Activated naive CD4-positive, alpha-beta T cell treated with anti-CD3 and anti-CD28 coated beads for 36 hours (primary cell): ENCODE measurements at regions of chr4 and their contacts with region 1.

Region 1: GRCh38 chr4:44678094-44679041 is at the start of gene GUF1:
- DNase-seq: peak; percentile 90
- H3K4me3 Mint-ChIP-seq: peak within 1 kb of the TSS; percentile 95
- H3K27ac Mint-ChIP-seq: peak within 1 kb of the TSS; percentile 94
- H3K4me1 Mint-ChIP-seq: peaks cover 35% of the 10 kb centered on the region
- H3K27me3 Mint-ChIP-seq: no peaks in the 10 kb centered on the region
- total RNA-seq, gene GUF1: 32.6 to 32.9 TPM

Region 2: DNA sequence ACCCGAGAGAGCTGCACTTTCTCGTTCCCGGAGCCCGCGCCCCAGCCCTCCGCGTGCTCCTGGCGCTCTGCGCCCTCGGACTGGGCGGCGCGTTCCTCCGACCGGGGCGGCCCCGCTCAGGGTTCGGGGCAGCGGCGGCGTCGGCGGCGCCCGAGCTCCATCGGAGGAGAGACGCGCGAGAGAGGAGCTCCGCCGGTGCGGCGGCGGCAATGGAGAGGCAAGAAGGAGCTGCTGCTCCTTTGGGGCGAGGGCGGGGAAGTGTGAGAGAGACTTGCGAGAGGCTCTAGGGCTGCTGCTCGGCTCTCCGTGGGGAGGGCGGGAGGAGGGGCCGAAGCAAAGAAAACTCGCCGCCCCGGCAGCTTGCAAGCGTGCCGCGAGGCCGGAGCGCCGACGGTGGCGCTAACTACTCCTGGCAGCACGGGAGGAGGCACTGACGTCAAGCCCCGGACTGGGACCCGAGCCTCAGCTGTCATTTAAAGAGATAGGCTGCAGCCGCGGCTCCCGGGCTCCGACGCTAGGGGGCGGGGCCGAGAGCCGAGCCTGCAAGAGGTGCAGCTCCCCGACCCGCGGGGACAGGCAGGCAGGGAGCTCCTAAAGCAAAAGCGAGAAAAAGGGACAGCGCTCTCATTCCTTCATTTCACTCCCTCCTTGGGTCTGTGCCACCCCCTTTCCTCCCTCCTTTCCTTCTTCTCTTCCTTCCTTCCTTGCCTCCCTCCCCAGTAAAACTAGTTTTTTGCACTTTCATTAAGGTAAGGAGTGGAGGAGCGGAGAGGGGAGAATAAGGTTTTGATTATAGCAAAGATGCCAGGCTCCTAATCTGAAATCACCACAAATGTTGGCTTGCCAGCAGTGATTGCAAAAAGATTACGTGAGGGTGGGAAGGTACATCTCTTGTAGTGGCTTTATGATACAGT is 229.6 kb before region 1 on chr4 and contains the start of gene KCTD8:
- CTCF ChIA-PET with region 1: no interaction called
- intact Hi-C with region 1: loop called (anchors 10 kb)
- DNase-seq: peak; percentile 74
- H3K4me3 Mint-ChIP-seq: peak within 1 kb of the TSS; percentile 62
- H3K27ac Mint-ChIP-seq: no peak within 1 kb of the TSS
- H3K4me1 Mint-ChIP-seq: peaks cover 17% of the 10 kb centered on the region
- H3K27me3 Mint-ChIP-seq: peaks cover 54% of the 10 kb centered on the region
- total RNA-seq, gene KCTD8: not detected

Region 3: DNA sequence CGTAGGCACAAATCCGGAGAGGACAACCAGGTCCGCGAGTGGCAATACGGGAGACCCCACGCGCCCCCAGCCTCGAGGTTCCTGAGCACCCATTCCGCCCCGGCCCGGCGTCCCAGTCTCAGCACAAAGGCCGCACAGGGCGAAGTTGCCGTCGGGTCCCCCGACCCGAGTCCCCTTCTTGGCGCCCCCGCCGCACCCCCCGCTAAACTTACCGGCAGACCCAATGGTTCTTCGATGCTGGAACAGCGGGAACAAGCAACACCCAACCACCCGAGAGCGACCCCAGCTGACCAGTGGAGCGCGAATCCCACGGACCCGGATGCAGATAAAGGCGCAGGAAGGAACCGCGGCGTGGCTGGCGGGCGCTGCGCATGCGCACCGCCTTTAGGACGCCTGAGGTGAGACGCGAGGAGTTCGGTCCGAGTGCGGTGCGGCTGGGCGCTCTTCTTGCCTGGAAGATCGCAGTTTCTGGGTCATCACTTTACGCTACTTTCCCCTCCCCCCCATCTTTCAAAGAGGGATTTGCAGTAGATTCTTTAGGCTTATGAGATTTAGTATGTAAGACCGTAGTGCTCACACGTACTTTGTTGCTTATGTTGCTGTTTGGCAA is 48.0 kb after region 1 on chr4 and contains the start of gene GNPDA2:
- CTCF ChIA-PET with region 1: interaction called, 3 read pairs
- intact Hi-C with region 1: loop called (anchors 1 kb)
- DNase-seq: peak; percentile 85
- H3K4me3 Mint-ChIP-seq: peak within 1 kb of the TSS; percentile 93
- H3K27ac Mint-ChIP-seq: peak within 1 kb of the TSS; percentile 84
- H3K4me1 Mint-ChIP-seq: peaks cover 35% of the 10 kb centered on the region
- H3K27me3 Mint-ChIP-seq: no peaks in the 10 kb centered on the region
- total RNA-seq, gene GNPDA2: 14.2 TPM